ENCODE measurements at regions of chr15 and their contacts with region 1.

Region 1: DNA sequence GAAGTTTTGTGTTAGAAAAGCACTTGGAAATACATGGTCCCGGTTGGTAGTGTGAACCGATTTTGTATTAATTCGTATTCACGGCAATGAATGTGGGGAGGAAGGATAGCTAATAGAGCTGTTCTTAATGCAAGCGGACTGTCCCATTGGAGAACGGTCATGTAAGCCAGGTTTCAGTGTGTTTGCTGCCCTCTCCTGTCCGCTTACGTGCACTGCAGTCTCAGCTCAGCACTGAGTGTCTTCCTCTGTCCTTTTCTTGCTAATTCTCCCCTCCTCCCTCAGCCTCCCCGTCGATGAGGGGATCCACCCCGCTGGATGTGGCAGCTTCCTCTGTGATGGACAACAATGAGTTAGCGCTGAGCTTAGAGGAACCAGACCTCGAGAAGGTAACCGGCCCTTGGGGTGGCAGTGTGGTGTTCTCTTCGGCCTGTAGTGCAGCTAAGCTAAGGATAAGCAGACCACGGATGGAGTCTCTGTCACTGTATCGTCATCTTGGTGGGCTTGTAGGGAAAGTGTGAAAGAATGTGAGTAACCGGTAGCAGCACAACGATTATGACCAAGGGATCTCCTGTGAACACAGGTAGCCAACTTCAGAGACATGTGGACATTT is 267.5 kb upstream of the CHRM5 start:
- DNase-seq: peak; percentile 65
- H3K4me3 Mint-ChIP-seq: no peak overlapping the region
- H3K27ac Mint-ChIP-seq: no peak overlapping the region
- H3K4me1 Mint-ChIP-seq: no peaks in the 10 kb centered on the region
- H3K27me3 Mint-ChIP-seq: peaks cover 8% of the 10 kb centered on the region

Region 2: GRCh38 chr15:33292717-33293307 is 408.0 kb before region 1 on chr15:
- CTCF ChIA-PET with region 1: interaction called, 46 read pairs
- DNase-seq: peak; percentile 61
- H3K4me3 Mint-ChIP-seq: no peak overlapping the region
- H3K27ac Mint-ChIP-seq: no peak overlapping the region
- H3K4me1 Mint-ChIP-seq: no peaks in the 10 kb centered on the region
- H3K27me3 Mint-ChIP-seq: no peaks in the 10 kb centered on the region

Region 3: GRCh38 chr15:33654860-33655259 is 45.9 kb before region 1 on chr15:
- CTCF ChIA-PET with region 1: no interaction called
- DNase-seq: no peak
- H3K4me3 Mint-ChIP-seq: no peak overlapping the region
- H3K27ac Mint-ChIP-seq: no peak overlapping the region
- H3K4me1 Mint-ChIP-seq: no peaks in the 10 kb centered on the region
- H3K27me3 Mint-ChIP-seq: no peaks in the 10 kb centered on the region

Region 4: DNA sequence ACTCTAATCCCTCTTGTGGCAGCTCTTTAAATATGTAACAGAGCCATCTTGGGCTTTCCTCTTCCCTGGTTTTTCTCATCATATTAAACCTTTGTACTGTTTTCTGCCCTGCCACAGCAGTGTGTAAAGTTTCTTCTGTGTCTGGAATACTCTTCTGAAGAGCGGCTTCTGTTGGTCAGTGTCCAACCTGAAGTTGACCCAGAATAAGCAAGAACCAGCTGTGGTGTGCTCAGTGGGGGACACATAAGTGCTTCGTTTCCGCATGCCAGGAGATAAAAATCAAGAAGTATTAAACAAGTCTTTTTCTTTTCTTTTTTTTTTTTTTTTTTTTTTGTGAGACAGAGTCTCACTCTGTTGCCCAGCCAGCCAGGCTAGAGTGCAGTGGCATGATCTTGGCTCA is 94.3 kb after region 1 on chr15:
- CTCF ChIA-PET with region 1: no interaction called
- DNase-seq: no peak
- H3K4me3 Mint-ChIP-seq: no peak overlapping the region
- H3K27ac Mint-ChIP-seq: no peak overlapping the region
- H3K4me1 Mint-ChIP-seq: no peaks in the 10 kb centered on the region
- H3K27me3 Mint-ChIP-seq: peaks cover 10% of the 10 kb centered on the region